GM12878 (cell line): ENCODE measurements at regions of chr17 and their contacts with region 1.

Region 1: DNA sequence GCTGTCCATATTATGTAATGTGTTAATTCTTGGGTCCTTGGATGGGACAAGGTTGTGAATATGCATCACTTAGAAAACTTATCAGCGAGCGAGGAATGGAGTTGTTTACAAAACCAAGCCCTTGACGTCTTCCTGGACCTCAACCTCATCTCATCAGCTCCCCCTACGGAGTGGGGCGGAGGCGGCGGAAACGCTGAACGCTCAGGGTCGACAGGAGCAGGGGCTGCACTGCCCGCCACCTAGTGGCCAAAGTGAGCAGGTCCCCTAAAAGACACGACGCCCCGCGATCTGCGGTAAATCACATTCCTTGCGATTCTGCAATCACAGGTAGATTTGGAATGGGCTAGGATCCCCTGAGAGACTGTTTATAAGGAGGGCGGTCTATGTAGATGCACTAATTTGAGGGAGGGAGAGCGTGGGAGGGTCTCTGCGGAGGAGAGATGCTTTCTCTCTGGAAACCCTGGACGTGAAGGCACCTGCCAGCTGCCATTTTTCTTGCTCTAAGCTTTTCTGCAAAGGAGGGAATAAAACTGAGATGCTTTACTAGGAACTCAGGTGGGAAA is 5.4 kb upstream of the ICAM2 start:
- DNase-seq: peak; percentile 55
- ATAC-seq: peak; percentile 90
- H3K4me3 ChIP-seq: no peak overlapping the region; the same call in 1 of the 2 replicates
- H3K27ac ChIP-seq: 0 out of 2 replicates have a peak overlapping the region, but pooled peaks have one; percentile 7
- H3K4me1 ChIP-seq: peaks cover 11% of the 10 kb centered on the region
- H3K27me3 ChIP-seq: no peaks in the 10 kb centered on the region
- CTCF ChIP-seq: peak; percentile 94 to 100 (median 97)
- EP300 ChIP-seq: no peak
- POLR2A ChIP-seq: no peak
- RAD21 ChIP-seq: peak; percentile 75

Region 2: GRCh38 chr17:63760771-63761539 is 264.9 kb before region 1 on chr17:
- CTCF ChIA-PET with region 1: no interaction called
- POLR2A ChIA-PET with region 1: no interaction called
- RAD21 ChIA-PET with region 1: no interaction called
- SMC1A ChIA-PET with region 1: no interaction called
- in situ Hi-C with region 1: no loop called
- intact Hi-C with region 1: no loop called
- DNase-seq: no peak
- ATAC-seq: no peak
- H3K4me3 ChIP-seq: no peak overlapping the region
- H3K27ac ChIP-seq: no peak overlapping the region
- H3K4me1 ChIP-seq: no peaks in the 10 kb centered on the region; the same call in 1 of the 2 replicates
- H3K27me3 ChIP-seq: no peaks in the 10 kb centered on the region
- CTCF ChIP-seq: no peak
- EP300 ChIP-seq: no peak
- POLR2A ChIP-seq: no peak
- RAD21 ChIP-seq: no peak

Region 3: DNA sequence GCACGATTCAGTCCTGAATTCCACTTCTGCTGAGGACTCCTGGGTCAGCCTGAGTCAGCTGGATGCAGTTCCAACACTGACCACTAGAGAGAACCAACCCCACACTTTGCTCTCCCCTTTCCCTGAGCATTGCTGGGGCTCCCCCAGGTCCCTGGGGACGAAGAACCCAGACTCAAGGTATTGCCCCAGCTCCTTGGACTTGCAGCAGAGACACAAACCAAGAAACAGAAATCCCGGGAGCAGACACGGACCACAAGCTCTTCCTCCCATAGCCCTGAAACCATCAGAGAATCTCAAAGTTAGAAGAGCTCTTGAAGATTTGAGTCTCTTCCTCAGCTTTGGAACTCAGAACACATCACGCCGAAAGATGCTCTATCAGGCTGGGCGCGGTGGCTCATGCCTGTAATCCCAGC is 106.5 kb before region 1 on chr17:
- CTCF ChIA-PET with region 1: interaction called, 351 read pairs
- POLR2A ChIA-PET with region 1: interaction called, 5 read pairs
- RAD21 ChIA-PET with region 1: interaction called, 54 read pairs
- SMC1A ChIA-PET with region 1: interaction called, 88 read pairs
- in situ Hi-C with region 1: loop called (anchors 5 kb)
- intact Hi-C with region 1: loop called (anchors 1 kb)
- DNase-seq: peak; percentile 71
- ATAC-seq: peak; percentile 83
- H3K4me3 ChIP-seq: no peak overlapping the region
- H3K27ac ChIP-seq: no peak overlapping the region
- H3K4me1 ChIP-seq: peaks cover 16% of the 10 kb centered on the region
- H3K27me3 ChIP-seq: no peaks in the 10 kb centered on the region
- CTCF ChIP-seq: peak; percentile 92 to 97 (median 94)
- EP300 ChIP-seq: no peak
- POLR2A ChIP-seq: no peak
- RAD21 ChIP-seq: peak; percentile 97

Region 4: GRCh38 chr17:63993368-63993985 is 32.3 kb before region 1 on chr17:
- CTCF ChIA-PET with region 1: interaction called, 14 read pairs
- POLR2A ChIA-PET with region 1: interaction called, 3 read pairs
- RAD21 ChIA-PET with region 1: interaction called, 6 read pairs
- SMC1A ChIA-PET with region 1: interaction called, 11 read pairs
- in situ Hi-C with region 1: no loop called
- intact Hi-C with region 1: no loop called
- DNase-seq: no peak
- ATAC-seq: no peak
- H3K4me3 ChIP-seq: no peak overlapping the region
- H3K27ac ChIP-seq: no peak overlapping the region
- H3K4me1 ChIP-seq: peaks cover 4% of the 10 kb centered on the region
- H3K27me3 ChIP-seq: peaks cover 3 to 7% of the 10 kb centered on the region in 2 experiments
- CTCF ChIP-seq: no peak
- EP300 ChIP-seq: no peak
- POLR2A ChIP-seq: no peak
- RAD21 ChIP-seq: no peak

Region 5: GRCh38 chr17:64056269-64057005 is 30.6 kb after region 1 on chr17:
- CTCF ChIA-PET with region 1: interaction called, 75 read pairs
- POLR2A ChIA-PET with region 1: no interaction called
- RAD21 ChIA-PET with region 1: interaction called, 11 read pairs
- SMC1A ChIA-PET with region 1: interaction called, 33 read pairs
- in situ Hi-C with region 1: no loop called
- intact Hi-C with region 1: no loop called
- DNase-seq: peak; percentile 57
- ATAC-seq: peak; percentile 88
- H3K4me3 ChIP-seq: no peak overlapping the region
- H3K27ac ChIP-seq: peak overlapping the region; percentile 35
- H3K4me1 ChIP-seq: peaks cover 30% of the 10 kb centered on the region
- H3K27me3 ChIP-seq: no peaks in the 10 kb centered on the region
- CTCF ChIP-seq: peak in 1 of 3 experiments; percentile 13; a peak in 1 of 6 replicates
- EP300 ChIP-seq: peak in 1 of 2 experiments; percentile 43; a peak in 1 of 4 replicates
- POLR2A ChIP-seq: no peak
- RAD21 ChIP-seq: 0 out of 2 replicates have a peak, but pooled peaks have one; percentile 13

Region 6: GRCh38 chr17:64110379-64111152 is 84.8 kb after region 1 on chr17:
- CTCF ChIA-PET with region 1: interaction called, 14 read pairs
- POLR2A ChIA-PET with region 1: no interaction called
- RAD21 ChIA-PET with region 1: no interaction called
- SMC1A ChIA-PET with region 1: interaction called, 3 read pairs
- in situ Hi-C with region 1: no loop called
- intact Hi-C with region 1: no loop called
- DNase-seq: no peak
- ATAC-seq: no peak
- H3K4me3 ChIP-seq: no peak overlapping the region
- H3K27ac ChIP-seq: no peak overlapping the region
- H3K4me1 ChIP-seq: peaks cover 19% of the 10 kb centered on the region; the same call in 1 of the 2 replicates
- H3K27me3 ChIP-seq: no peaks in the 10 kb centered on the region
- CTCF ChIP-seq: no peak
- EP300 ChIP-seq: no peak
- POLR2A ChIP-seq: no peak
- RAD21 ChIP-seq: no peak

Region 7: DNA sequence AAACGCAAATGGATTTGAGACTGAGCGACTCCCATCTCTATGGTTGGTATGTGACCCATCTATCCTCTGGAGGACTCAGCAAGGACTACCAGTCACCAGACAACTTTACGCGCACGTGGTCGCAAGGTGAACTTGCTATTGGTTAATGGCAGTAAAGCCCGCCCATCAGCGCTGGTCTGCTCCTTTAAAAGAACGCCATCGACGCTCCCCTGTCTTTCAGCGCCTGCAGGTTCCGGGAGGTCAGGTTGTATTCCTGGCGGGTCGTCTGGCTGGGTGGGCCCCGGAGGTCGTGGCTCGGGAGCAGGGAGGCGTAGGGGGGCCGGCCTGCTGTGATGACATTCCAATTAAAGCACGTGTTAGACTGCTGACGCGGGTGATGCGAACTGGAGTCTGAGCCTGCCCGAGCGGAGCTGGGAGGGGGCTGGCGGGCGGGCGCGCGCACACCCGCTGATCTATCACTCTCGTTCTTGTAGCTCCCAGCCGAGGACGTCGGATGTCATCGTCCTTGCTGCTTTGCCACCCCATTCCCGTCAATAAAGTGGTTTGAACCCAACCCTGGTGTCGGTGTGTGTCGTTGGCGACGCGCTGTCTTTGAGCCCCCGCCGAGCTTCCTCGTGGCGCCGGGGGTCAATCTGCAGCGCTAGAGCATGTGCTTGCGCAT is 120.1 kb after region 1 on chr17:
- CTCF ChIA-PET with region 1: interaction called, 16 read pairs
- POLR2A ChIA-PET with region 1: interaction called, 10 read pairs
- RAD21 ChIA-PET with region 1: interaction called, 8 read pairs
- SMC1A ChIA-PET with region 1: interaction called, 10 read pairs
- in situ Hi-C with region 1: no loop called
- intact Hi-C with region 1: no loop called
- DNase-seq: peak; percentile 97
- ATAC-seq: peak; percentile 95
- H3K4me3 ChIP-seq: peak overlapping the region; percentile 79
- H3K27ac ChIP-seq: peak overlapping the region; percentile 94
- H3K4me1 ChIP-seq: peaks cover 3% of the 10 kb centered on the region; the same call in 1 of the 2 replicates
- H3K27me3 ChIP-seq: no peaks in the 10 kb centered on the region
- CTCF ChIP-seq: no peak
- EP300 ChIP-seq: no peak
- POLR2A ChIP-seq: peak; percentile 98
- RAD21 ChIP-seq: no peak